ENCODE measurements at regions of chr11 and their contacts with region 1.

Region 1: GRCh38 chr11:123407130-123407995 is 22.7 kb upstream of the GRAMD1B start:
- DNase-seq: no peak
- ATAC-seq: peak; percentile 81
- H3K4me3 ChIP-seq: peak overlapping the region; percentile 58
- H3K27ac ChIP-seq: peak overlapping the region; percentile 75
- H3K4me1 ChIP-seq: peaks cover 57% of the 10 kb centered on the region
- H3K27me3 ChIP-seq: no peaks in the 10 kb centered on the region
- CTCF ChIP-seq: peak; percentile 79 to 81 (median 80)
- EP300 ChIP-seq: 0 out of 4 replicates have a peak, but pooled peaks of 1 of the 2 experiments have one; percentile 8
- POLR2A ChIP-seq: no peak
- RAD21 ChIP-seq: peak; percentile 83

Region 2: GRCh38 chr11:123301696-123302400 is 105.5 kb before region 1 on chr11:
- CTCF ChIA-PET with region 1: interaction called, 104 read pairs
- POLR2A ChIA-PET with region 1: interaction called, 3 read pairs
- RAD21 ChIA-PET with region 1: interaction called, 34 read pairs
- SMC1A ChIA-PET with region 1: interaction called, 39 read pairs
- in situ Hi-C with region 1: loop called (anchors 5 kb)
- intact Hi-C with region 1: loop called (anchors 1 kb)
- DNase-seq: peak; percentile 32
- ATAC-seq: peak; percentile 83
- H3K4me3 ChIP-seq: peak overlapping the region; percentile 62; the same call in 1 of the 2 replicates
- H3K27ac ChIP-seq: peak overlapping the region; percentile 75
- H3K4me1 ChIP-seq: peaks cover 29% of the 10 kb centered on the region
- H3K27me3 ChIP-seq: no peaks in the 10 kb centered on the region
- CTCF ChIP-seq: peak; percentile 76 to 93 (median 84); a peak in 5 of 6 replicates
- EP300 ChIP-seq: no peak
- POLR2A ChIP-seq: no peak; the same call in 1 of the 2 replicates
- RAD21 ChIP-seq: peak; percentile 86

Region 3: DNA sequence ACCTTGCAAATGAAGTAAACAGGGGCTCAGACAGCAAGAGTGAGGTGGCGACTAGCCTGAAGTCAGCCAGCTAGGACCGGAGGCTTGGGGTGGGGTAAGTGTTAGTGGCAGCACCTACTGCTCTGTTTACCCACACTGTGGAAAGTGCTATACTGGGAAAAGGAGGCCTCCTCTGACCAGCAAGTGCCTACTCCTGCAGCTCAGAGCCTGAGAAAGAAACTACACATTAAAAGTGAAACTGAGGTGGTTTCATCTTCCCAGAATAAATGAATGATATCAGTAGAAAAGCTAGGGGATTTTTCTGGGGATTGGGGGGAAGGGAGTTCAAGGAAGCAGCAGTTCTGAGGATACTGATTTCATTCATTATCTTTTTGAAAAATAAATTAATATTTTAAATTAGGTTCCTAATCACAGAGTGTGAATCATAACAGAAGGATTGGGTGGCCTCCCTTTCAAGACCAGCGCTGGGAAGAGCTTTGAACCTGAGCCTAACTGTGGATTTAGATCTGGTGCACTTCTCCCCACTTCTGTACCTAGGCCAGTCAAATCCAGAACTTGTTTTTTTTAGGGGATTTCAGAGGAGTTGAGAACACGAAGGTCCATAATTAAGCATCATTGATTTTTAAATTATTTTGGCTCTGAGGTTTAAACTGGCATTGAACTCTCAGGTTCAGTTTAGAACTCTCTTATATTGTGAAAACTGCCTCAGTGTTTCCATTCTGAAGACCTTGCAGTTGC is 25.4 kb before region 1 on chr11:
- CTCF ChIA-PET with region 1: interaction called, 76 read pairs
- POLR2A ChIA-PET with region 1: interaction called, 4 read pairs
- RAD21 ChIA-PET with region 1: interaction called, 60 read pairs
- SMC1A ChIA-PET with region 1: interaction called, 157 read pairs
- in situ Hi-C with region 1: no loop called
- intact Hi-C with region 1: loop called (anchors 1 kb)
- DNase-seq: peak; percentile 92
- ATAC-seq: peak; percentile 91
- H3K4me3 ChIP-seq: peak overlapping the region; percentile 10; the same call in 1 of the 2 replicates
- H3K27ac ChIP-seq: peak overlapping the region; percentile 98
- H3K4me1 ChIP-seq: peaks cover 51% of the 10 kb centered on the region
- H3K27me3 ChIP-seq: no peaks in the 10 kb centered on the region
- CTCF ChIP-seq: no peak
- EP300 ChIP-seq: peak; percentile 44 to 68; a peak in 2 of 4 replicates
- POLR2A ChIP-seq: no peak
- RAD21 ChIP-seq: no peak

Region 4: DNA sequence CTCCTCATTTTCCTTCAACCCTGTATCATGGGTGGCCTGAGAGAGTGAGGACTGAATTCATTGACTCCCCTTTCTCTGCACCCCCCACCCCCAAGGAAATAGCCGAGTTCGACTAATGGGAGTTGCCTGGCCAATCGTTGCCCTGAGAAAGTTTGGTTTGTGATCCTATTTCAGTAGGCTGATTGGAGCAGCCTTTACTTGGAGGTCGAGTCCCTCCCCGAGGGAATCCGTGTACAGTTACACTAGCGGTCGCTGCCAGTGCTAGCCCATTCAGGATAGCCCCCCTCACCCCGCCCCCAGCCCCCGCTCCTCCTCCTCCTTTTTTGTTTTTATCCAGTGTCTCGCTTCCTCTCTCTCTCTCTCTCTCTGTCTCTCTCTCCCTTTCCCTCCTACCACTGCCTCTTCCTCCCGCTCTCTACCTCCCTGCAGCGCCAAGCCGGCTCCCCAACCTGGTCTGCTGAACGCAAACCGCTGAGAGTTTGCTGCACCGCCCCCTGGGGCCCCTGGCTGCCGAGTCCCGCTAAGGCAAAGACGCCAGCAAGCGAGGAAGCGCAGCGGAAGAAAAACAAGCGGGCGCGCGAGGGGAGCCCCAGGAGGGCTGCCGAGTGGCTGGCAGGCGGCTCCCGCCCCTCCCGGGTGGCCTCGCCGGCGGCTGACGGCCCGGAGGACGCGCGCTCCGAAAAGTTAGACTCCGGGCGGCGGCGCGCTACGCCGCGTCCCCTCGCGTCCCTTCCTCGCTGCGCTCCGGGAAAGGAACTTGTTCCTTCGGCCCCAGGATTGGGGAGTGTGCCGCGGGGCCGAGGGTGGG is 22.8 kb after region 1 on chr11 and contains the start of gene GRAMD1B:
- CTCF ChIA-PET with region 1: interaction called, 137 read pairs
- POLR2A ChIA-PET with region 1: interaction called, 4 read pairs
- RAD21 ChIA-PET with region 1: interaction called, 64 read pairs
- SMC1A ChIA-PET with region 1: interaction called, 69 read pairs
- in situ Hi-C with region 1: no loop called
- intact Hi-C with region 1: loop called (anchors 1 kb)
- DNase-seq: no peak
- ATAC-seq: peak; percentile 78
- H3K4me3 ChIP-seq: peak within 1 kb of the TSS; percentile 87
- H3K27ac ChIP-seq: peak within 1 kb of the TSS; percentile 40
- H3K4me1 ChIP-seq: peaks cover 3% of the 10 kb centered on the region
- H3K27me3 ChIP-seq: no peaks in the 10 kb centered on the region
- CTCF ChIP-seq: peak; percentile 19 to 29 (median 28); a peak in 3 of 6 replicates
- EP300 ChIP-seq: no peak
- POLR2A ChIP-seq: no peak; the same call in 1 of the 2 replicates
- RAD21 ChIP-seq: no peak
- polyA plus RNA-seq, gene GRAMD1B: 1.9 to 3.5 TPM

Region 5: GRCh38 chr11:123461164-123461563 is 53.8 kb after region 1 on chr11:
- CTCF ChIA-PET with region 1: interaction called, 18 read pairs
- POLR2A ChIA-PET with region 1: interaction called, 6 read pairs
- RAD21 ChIA-PET with region 1: interaction called, 8 read pairs
- SMC1A ChIA-PET with region 1: interaction called, 11 read pairs
- in situ Hi-C with region 1: no loop called
- intact Hi-C with region 1: no loop called
- DNase-seq: no peak
- ATAC-seq: no peak
- H3K4me3 ChIP-seq: no peak overlapping the region
- H3K27ac ChIP-seq: no peak overlapping the region
- H3K4me1 ChIP-seq: peaks cover 8% of the 10 kb centered on the region; the same call in 1 of the 2 replicates
- H3K27me3 ChIP-seq: no peaks in the 10 kb centered on the region
- CTCF ChIP-seq: no peak
- EP300 ChIP-seq: no peak
- POLR2A ChIP-seq: no peak
- RAD21 ChIP-seq: no peak

Region 6: DNA sequence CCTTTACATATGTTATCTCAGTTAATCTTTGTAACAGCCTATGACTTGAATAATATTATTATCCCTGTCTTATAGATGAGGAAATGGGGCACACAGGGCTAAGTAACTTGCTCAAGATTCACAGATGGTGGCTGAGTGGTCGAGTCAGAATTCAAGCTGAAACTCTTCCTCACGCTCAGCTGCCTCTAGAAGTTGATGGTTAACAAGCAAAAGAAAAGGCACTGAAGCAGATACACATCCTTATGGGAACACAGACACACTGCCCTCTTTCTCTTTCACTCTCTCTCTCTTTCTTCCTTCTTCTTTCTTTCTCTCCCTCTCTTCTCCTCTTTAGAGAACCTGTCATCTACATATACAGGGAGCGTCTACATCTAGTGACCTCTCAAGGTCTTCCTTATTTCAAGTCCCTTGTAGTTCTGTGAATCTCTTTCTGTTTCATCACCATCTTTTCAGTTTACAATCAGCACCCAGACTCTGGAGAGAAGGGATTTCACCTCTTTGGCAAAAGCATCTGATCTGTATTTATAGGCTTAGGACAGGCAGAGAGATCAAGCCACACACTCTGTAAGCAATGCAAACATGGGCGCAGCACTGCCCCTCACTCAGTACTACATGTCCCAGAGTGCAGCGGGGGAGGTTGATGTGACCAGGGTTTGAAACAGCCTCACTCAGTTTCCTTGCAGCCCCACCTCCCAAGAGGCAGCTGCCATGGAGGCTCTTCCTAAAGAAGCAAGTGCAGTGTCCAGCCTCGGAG is 98.4 kb after region 1 on chr11:
- CTCF ChIA-PET with region 1: interaction called, 11 read pairs
- POLR2A ChIA-PET with region 1: no interaction called
- RAD21 ChIA-PET with region 1: interaction called, 5 read pairs
- SMC1A ChIA-PET with region 1: interaction called, 3 read pairs
- in situ Hi-C with region 1: no loop called
- intact Hi-C with region 1: no loop called
- DNase-seq: no peak
- ATAC-seq: peak; percentile 81
- H3K4me3 ChIP-seq: no peak overlapping the region
- H3K27ac ChIP-seq: no peak overlapping the region
- H3K4me1 ChIP-seq: peaks cover 13% of the 10 kb centered on the region
- H3K27me3 ChIP-seq: no peaks in the 10 kb centered on the region
- CTCF ChIP-seq: no peak
- EP300 ChIP-seq: no peak
- POLR2A ChIP-seq: no peak
- RAD21 ChIP-seq: no peak

Region 7: GRCh38 chr11:123580557-123581275 is 173.4 kb after region 1 on chr11:
- CTCF ChIA-PET with region 1: interaction called, 47 read pairs
- POLR2A ChIA-PET with region 1: interaction called, 5 read pairs
- RAD21 ChIA-PET with region 1: interaction called, 15 read pairs
- SMC1A ChIA-PET with region 1: interaction called, 13 read pairs
- in situ Hi-C with region 1: no loop called
- intact Hi-C with region 1: no loop called
- DNase-seq: no peak
- ATAC-seq: peak; percentile 93
- H3K4me3 ChIP-seq: no peak overlapping the region
- H3K27ac ChIP-seq: no peak overlapping the region
- H3K4me1 ChIP-seq: peaks cover 9% of the 10 kb centered on the region
- H3K27me3 ChIP-seq: no peaks in the 10 kb centered on the region
- CTCF ChIP-seq: peak; percentile 94 to 100 (median 96)
- EP300 ChIP-seq: no peak
- POLR2A ChIP-seq: no peak
- RAD21 ChIP-seq: peak; percentile 71

Measured in GM12878 (cell line).